Adrenal gland (tissue), 19 donors: ENCODE measurements at regions of chr11 and their contacts with region 1.

Region 1: GRCh38 chr11:299951-300735 is 817 bp upstream of the IFITM5 start:
- DNase-seq: no peak
- H3K4me3 ChIP-seq: no peak overlapping the region
- H3K27ac ChIP-seq: no peak overlapping the region
- H3K4me1 ChIP-seq: no peaks in the 10 kb centered on the region
- H3K27me3 ChIP-seq: peaks cover 9% of the 10 kb centered on the region
- CTCF ChIP-seq: no peak
- POLR2A ChIP-seq: no peak

Region 2: DNA sequence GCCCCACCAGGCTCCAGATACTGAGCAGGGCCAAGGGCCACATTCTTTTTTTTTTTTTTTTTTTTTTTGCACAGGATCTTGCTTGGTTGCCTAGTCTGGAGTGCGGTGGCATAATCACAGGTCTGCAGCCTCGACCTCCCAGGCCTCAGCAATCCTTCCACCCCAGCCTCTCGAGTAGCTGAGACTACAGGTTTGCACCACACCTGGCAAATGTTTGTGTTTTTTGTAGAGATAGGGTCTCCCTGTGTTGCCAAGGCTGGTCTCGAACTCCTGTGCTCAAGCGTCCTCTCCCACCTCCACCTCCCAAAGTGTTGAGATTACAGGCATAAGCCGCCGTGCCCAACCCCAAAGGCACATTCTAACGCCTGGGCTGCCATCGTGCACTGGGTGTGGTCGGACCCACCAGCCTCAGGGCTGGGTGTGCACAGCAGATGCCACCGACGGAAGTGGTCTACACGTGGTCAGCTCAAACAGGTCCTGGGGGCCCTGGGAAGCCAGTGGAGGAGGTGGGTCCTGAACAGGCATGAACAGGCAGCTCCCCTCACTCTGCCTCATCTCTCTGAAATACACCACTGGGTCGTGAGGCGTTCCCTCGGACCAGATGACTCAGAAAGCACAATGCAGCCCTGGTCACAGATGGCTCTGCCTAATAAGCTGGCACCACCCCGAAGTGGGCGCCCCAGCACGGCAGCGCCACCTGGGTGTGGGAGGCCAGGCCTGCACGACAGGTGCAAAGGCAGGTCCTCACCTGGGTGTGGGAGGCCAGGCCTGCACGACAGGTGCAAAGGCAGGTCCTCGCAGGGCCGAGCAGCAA is 64.0 kb after region 1 on chr11:
- intact Hi-C with region 1: loop called (anchors 5 kb)
- DNase-seq: peak in 3 of 7 donors; percentile 16 to 36 (median 29)
- H3K4me3 ChIP-seq: no peak overlapping the region
- H3K27ac ChIP-seq: no peak overlapping the region
- H3K4me1 ChIP-seq: no peaks in the 10 kb centered on the region
- H3K27me3 ChIP-seq: peaks cover 39% of the 10 kb centered on the region
- CTCF ChIP-seq: peak in 2 of 6 experiments; percentile 12 to 33
- POLR2A ChIP-seq: no peak

Region 3: GRCh38 chr11:447923-448731 is 148.0 kb after region 1 on chr11:
- intact Hi-C with region 1: loop called in 1 of 2 experiments (anchors 10 kb)
- DNase-seq: peak; percentile 93 to 98 (median 96)
- H3K4me3 ChIP-seq: peak overlapping the region in 3 of 4 donors; percentile 27 to 59 (median 39)
- H3K27ac ChIP-seq: peak overlapping the region; percentile 65 to 94 (median 92)
- H3K4me1 ChIP-seq: peaks cover 17 to 25% of the 10 kb centered on the region in 2 donors
- H3K27me3 ChIP-seq: no peaks in the 10 kb centered on the region
- CTCF ChIP-seq: peak; percentile 52 to 92 (median 83)
- POLR2A ChIP-seq: peak; percentile 74 to 77